Activated CD8-positive, alpha-beta T cell treated with anti-CD3 and anti-CD28 coated beads, Interleukin-2, amount 10 ng/mL, durations not matched to agents 7 days and 5 days (primary cell): ENCODE measurements at regions of chr2 and their contacts with region 1.

Region 1: GRCh38 chr2:162301151-162301804 is 17.2 kb downstream of the IFIH1 start:
- DNase-seq: peak; percentile 76
- ATAC-seq: peak; percentile 75
- H3K4me3 Mint-ChIP-seq: no peak overlapping the region
- H3K27ac Mint-ChIP-seq: no peak overlapping the region
- H3K4me1 Mint-ChIP-seq: no peaks in the 10 kb centered on the region
- H3K27me3 Mint-ChIP-seq: no peaks in the 10 kb centered on the region

Region 2: GRCh38 chr2:161586517-161587167 is 714.6 kb before region 1 on chr2:
- CTCF ChIA-PET with region 1: interaction called, 16 read pairs
- POLR2A ChIA-PET with region 1: no interaction called
- DNase-seq: no peak
- ATAC-seq: peak; percentile 44
- H3K4me3 Mint-ChIP-seq: no peak overlapping the region
- H3K27ac Mint-ChIP-seq: no peak overlapping the region
- H3K4me1 Mint-ChIP-seq: no peaks in the 10 kb centered on the region
- H3K27me3 Mint-ChIP-seq: peaks cover 20% of the 10 kb centered on the region

Region 3: DNA sequence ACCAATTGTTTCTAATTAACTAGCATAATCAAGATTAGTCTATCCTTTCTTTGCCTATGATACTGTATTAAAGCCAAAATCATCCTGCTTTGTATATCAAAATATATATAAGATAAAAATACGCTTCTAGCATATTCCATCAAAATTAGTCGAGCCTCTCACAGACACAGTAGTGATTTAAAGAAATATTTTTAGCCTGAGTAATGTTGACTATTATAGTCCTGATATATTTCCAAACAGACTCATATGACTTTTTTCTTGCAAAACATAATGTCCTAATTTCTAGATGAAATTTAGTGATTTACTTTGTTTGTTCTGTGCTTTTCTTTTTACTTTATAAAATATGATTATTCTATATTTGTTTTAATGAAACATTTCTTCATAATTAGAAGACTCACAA is 88.9 kb before region 1 on chr2:
- CTCF ChIA-PET with region 1: interaction called, 13 read pairs
- POLR2A ChIA-PET with region 1: no interaction called
- DNase-seq: no peak
- ATAC-seq: no peak
- H3K4me3 Mint-ChIP-seq: no peak overlapping the region
- H3K27ac Mint-ChIP-seq: no peak overlapping the region
- H3K4me1 Mint-ChIP-seq: no peaks in the 10 kb centered on the region
- H3K27me3 Mint-ChIP-seq: peaks cover 17% of the 10 kb centered on the region

Region 4: DNA sequence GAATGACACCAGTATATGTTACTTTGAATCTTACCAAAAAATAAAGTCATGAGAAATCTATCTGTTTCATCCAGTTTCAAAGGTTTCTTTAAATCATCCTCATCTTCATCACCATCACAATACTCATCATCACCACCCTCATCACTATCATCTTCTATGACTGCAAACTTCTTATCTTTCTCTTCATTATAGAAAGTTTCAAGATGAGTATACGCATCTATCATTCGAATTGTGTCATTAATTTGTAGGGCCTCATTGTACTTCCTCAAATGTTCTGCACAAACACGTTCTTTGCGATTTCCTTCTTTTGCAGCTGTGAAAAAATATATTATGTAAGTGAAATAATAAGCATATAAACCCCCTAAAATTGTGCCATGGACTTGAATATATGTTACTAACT is 23.9 kb before region 1 on chr2:
- CTCF ChIA-PET with region 1: interaction called, 27 read pairs
- POLR2A ChIA-PET with region 1: no interaction called
- DNase-seq: no peak
- ATAC-seq: no peak
- H3K4me3 Mint-ChIP-seq: no peak overlapping the region
- H3K27ac Mint-ChIP-seq: no peak overlapping the region
- H3K4me1 Mint-ChIP-seq: no peaks in the 10 kb centered on the region
- H3K27me3 Mint-ChIP-seq: no peaks in the 10 kb centered on the region

Region 5: DNA sequence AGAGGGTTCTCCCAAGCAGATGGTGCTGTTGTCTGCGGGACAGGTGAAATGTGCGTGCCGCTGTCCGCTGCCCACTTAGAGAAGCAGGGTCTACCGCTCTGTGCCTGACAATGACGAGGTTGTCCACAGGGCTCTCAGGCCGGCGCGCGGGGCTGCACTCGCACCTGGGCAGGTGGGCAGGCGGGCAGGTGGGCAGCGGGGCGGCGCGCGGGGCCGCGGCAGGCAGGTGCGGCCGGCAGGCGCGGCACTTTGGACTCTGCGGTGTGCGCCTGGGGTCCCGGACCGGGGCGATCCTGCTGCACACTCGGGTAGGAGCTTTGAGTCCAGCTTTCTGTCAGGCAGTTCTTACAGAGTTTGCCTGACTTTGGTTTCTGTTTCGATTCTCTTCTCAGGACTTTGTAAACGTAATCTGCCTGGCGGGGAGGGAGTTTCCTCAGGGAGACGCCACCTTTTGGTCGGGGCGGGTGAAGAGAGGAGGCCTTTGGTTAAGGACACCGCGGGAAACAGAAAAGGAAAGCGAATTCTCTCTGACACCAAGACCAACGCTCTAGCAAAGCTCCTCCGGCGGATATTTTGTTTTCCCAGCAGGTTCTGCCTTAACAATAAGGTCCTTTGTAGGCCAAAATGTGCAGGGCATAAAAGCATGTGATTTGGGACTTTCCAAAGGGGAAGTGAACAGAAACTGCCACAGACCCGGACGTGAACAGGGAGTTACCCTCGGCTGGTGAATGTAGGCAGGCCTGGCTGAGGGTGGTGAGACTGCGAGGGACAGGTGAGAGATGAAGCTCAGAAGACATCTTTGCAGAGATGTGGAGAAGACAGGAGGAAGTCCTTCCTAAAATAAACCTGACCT is 17.3 kb after region 1 on chr2 and contains the start of gene IFIH1:
- CTCF ChIA-PET with region 1: interaction called, 53 read pairs
- POLR2A ChIA-PET with region 1: interaction called, 8 read pairs
- DNase-seq: peak; percentile 82
- ATAC-seq: peak; percentile 87
- H3K4me3 Mint-ChIP-seq: peak within 1 kb of the TSS; percentile 95
- H3K27ac Mint-ChIP-seq: peak within 1 kb of the TSS; percentile 99
- H3K4me1 Mint-ChIP-seq: peaks cover 61% of the 10 kb centered on the region
- H3K27me3 Mint-ChIP-seq: no peaks in the 10 kb centered on the region
- total RNA-seq, gene IFIH1: 37.3 to 37.6 TPM